Activated B cell treated with CpG ODN at 0.5 μM for 24 hours (primary cell): ENCODE measurements at regions of chr3 and their contacts with region 1.

Region 1: GRCh38 chr3:58899159-58899952 is 150.5 kb downstream of the CFAP20DC start:
- DNase-seq: peak; percentile 23
- ATAC-seq: peak; percentile 91
- H3K4me3 Mint-ChIP-seq: peak overlapping the region; percentile 50
- H3K27ac Mint-ChIP-seq: peak overlapping the region; percentile 47
- H3K4me1 Mint-ChIP-seq: peaks cover 34% of the 10 kb centered on the region
- H3K27me3 Mint-ChIP-seq: no peaks in the 10 kb centered on the region
- CTCF ChIP-seq: no peak

Region 2: GRCh38 chr3:58691997-58692396 is 207.4 kb before region 1 on chr3:
- CTCF ChIA-PET with region 1: no interaction called
- POLR2A ChIA-PET with region 1: no interaction called
- intact Hi-C with region 1: no loop called
- DNase-seq: no peak
- ATAC-seq: no peak
- H3K4me3 Mint-ChIP-seq: no peak overlapping the region
- H3K27ac Mint-ChIP-seq: no peak overlapping the region
- H3K4me1 Mint-ChIP-seq: no peaks in the 10 kb centered on the region
- H3K27me3 Mint-ChIP-seq: peaks cover 6% of the 10 kb centered on the region
- CTCF ChIP-seq: no peak

Region 3: DNA sequence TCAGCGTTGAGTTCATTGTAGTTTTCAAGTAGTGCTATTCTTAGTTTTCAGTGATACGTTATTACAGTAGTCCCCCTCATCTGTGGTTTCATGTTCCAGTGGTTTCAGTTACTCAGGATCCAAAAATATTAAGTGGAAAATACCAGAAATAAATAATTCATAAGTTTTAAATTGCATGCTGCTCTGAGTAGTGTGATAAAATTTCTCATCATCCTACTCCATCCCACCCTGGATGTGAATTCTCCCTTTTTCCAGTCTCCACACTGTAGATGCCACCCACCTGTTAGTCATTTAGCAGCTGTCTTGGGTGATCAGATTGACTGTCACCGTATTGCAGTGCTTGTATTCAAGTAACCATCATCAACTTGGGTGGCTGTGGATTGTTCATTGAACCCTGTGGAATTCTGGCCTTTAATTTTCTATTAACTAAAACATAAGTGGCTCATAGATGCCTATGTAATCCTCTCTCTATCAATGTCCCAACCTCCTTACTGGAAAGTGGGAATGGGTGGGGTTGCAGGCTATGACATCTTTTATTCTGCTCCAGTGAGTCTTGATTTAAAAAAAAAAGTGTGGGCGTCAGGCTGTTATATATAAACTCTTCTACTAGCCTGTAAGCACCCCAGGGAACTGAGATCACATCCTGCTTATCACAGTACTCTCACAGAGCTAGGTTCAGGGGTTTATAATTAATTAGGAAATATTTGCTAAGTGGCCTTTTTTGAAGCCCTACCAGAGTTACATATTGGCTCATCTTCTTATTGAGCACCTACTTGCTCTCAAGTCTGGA is 53.0 kb after region 1 on chr3:
- CTCF ChIA-PET with region 1: no interaction called
- POLR2A ChIA-PET with region 1: no interaction called
- intact Hi-C with region 1: loop called (anchors 10 kb)
- DNase-seq: no peak
- ATAC-seq: peak; percentile 80
- H3K4me3 Mint-ChIP-seq: peak overlapping the region; percentile 20
- H3K27ac Mint-ChIP-seq: peak overlapping the region; percentile 71
- H3K4me1 Mint-ChIP-seq: peaks cover 48% of the 10 kb centered on the region
- H3K27me3 Mint-ChIP-seq: no peaks in the 10 kb centered on the region
- CTCF ChIP-seq: no peak